ENCODE measurements at regions of chr10 and their contacts with region 1.

Region 1: GRCh38 chr10:72692057-72692910 is at the start of gene MCU:
- DNase-seq: peak; percentile 90
- ATAC-seq: peak; percentile 96
- H3K4me3 Mint-ChIP-seq: peak within 1 kb of the TSS; percentile 90
- H3K27ac Mint-ChIP-seq: peak within 1 kb of the TSS; percentile 81
- H3K4me1 Mint-ChIP-seq: peaks cover 44% of the 10 kb centered on the region
- H3K27me3 Mint-ChIP-seq: no peaks in the 10 kb centered on the region
- CTCF ChIP-seq: no peak
- total RNA-seq, gene MCU: 13.8 and 15.5 TPM in 2 replicates

Region 2: DNA sequence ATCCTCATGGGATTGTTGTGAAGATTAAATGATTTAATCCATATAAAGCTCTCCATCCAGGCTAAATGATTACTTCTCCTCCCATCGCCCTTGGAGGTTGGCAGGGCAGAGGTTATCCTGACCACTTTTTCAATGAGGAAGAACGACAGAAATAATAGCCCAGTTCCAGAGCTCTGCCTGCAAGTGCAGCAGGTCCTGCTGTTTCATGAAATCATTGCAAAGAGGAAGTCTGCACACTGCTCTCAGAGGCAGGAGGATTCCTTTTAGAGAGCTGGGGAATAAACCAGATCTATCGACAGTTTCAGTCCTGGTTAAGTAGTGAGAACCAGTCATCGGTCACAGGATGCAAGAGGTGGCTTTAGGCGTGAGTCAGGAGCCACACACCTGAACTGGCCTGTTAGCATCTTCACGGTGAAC is 1320.5 kb before region 1 on chr10:
- CTCF ChIA-PET with region 1: no interaction called
- POLR2A ChIA-PET with region 1: interaction called, 12 read pairs
- intact Hi-C with region 1: no loop called
- DNase-seq: no peak
- ATAC-seq: peak; percentile 43
- H3K4me3 Mint-ChIP-seq: peak overlapping the region; percentile 50
- H3K27ac Mint-ChIP-seq: peak overlapping the region; percentile 90
- H3K4me1 Mint-ChIP-seq: peaks cover 44% of the 10 kb centered on the region
- H3K27me3 Mint-ChIP-seq: no peaks in the 10 kb centered on the region
- CTCF ChIP-seq: no peak

Region 3: GRCh38 chr10:72364239-72364777 is 328.0 kb before region 1 on chr10:
- CTCF ChIA-PET with region 1: no interaction called
- POLR2A ChIA-PET with region 1: interaction called, 4 read pairs
- intact Hi-C with region 1: loop called (anchors 2 kb)
- DNase-seq: peak; percentile 74
- ATAC-seq: peak; percentile 100
- H3K4me3 Mint-ChIP-seq: peak overlapping the region; percentile 38
- H3K27ac Mint-ChIP-seq: peak overlapping the region; percentile 83
- H3K4me1 Mint-ChIP-seq: peaks cover 13% of the 10 kb centered on the region
- H3K27me3 Mint-ChIP-seq: no peaks in the 10 kb centered on the region
- CTCF ChIP-seq: no peak

Region 4: GRCh38 chr10:72625608-72626443 is 66.5 kb before region 1 on chr10 and contains the start of gene MICU1:
- CTCF ChIA-PET with region 1: no interaction called
- POLR2A ChIA-PET with region 1: interaction called, 7 read pairs
- intact Hi-C with region 1: loop called (anchors 1 kb)
- DNase-seq: peak; percentile 83
- ATAC-seq: peak; percentile 98
- H3K4me3 Mint-ChIP-seq: peak within 1 kb of the TSS; percentile 100
- H3K27ac Mint-ChIP-seq: peak within 1 kb of the TSS; percentile 97
- H3K4me1 Mint-ChIP-seq: peaks cover 12% of the 10 kb centered on the region
- H3K27me3 Mint-ChIP-seq: no peaks in the 10 kb centered on the region
- CTCF ChIP-seq: no peak
- total RNA-seq, gene MICU1: 27.4 and 34.5 TPM in 2 replicates

Region 5: DNA sequence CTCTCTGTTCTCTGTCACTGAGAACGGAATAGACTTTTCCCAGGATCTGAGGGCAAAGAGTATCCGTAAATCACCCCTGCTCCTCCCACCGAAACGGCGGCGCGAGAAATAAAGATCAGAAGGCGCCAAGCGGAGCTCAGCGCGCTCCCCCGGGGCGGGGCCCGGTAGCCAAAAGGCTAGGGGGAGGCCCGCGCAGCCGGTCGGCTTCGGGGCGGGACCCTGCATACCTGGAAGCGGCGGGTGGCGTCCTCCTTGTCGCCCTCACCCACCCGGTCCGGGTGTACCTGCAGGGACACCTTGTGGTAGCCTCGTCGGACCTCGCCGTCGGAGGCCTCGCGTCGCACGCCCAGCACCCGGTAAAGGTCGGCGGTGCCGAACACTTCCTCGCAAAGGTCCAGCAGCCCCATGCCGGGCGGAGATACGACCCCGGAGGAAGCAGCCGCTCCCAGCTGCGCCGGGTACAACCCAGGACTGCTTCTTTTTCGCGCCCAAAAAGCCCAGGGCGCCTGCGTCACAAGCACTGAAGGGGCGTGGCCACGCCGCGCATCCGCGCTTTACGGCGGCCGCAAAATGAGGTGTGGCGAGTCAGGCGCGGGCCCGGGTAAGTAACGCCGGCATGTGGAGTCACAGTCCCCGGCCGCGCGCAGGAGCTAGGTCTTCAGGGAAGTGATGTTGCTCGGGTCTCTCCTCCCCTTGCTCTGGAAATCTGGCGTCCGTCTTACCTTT is 554.7 kb after region 1 on chr10 and contains the start of gene DNAJC9:
- CTCF ChIA-PET with region 1: no interaction called
- POLR2A ChIA-PET with region 1: no interaction called
- intact Hi-C with region 1: loop called (anchors 10 kb)
- DNase-seq: peak; percentile 99
- ATAC-seq: peak; percentile 84
- H3K4me3 Mint-ChIP-seq: peak within 1 kb of the TSS; percentile 93
- H3K27ac Mint-ChIP-seq: peak within 1 kb of the TSS; percentile 93
- H3K4me1 Mint-ChIP-seq: peaks cover 56% of the 10 kb centered on the region
- H3K27me3 Mint-ChIP-seq: no peaks in the 10 kb centered on the region
- CTCF ChIP-seq: no peak
- total RNA-seq, gene DNAJC9: 22.8 and 24.4 TPM in 2 replicates

Measured in activated B cell treated with CpG ODN at 0.5 μM for 24 hours (primary cell).